ENCODE measurements at regions of chr3 and their contacts with region 1.

Region 1: DNA sequence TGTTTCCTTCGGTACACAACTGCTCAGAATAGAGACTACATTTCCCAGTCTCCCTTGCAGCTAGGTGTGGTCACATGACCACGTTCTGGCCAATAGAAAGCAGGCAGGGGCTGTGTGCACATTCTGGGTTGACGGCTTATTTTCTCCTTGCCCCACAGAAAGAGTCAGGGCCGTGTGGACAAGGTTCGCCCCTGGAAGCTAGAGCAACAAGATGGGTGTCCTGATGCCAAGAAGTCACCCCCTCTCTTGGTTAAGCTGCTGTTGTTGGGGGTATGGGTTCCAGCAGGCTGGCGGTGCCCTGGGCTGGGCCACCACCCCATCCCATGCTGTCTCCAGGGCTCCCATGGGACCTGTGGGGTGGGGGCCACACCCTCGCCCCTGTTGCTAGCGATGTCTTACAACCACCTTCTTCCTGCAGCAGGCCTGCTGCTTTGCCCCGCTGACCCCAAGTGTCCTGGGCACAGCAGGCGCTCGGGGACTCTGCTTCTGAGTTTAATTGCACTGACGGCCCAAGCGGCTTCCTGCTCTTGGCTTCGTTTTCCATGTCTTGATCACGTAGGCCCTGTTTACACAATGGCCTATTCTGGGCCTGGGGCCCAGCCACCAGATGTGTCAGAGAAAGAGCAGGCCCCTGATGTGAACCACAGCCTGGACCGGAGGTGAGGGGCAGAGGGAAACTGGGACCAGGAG is 24.9 kb downstream of the ABTB1 start:
- DNase-seq: peak; percentile 48
- ATAC-seq: peak; percentile 94
- H3K4me3 ChIP-seq: no peak overlapping the region
- H3K27ac ChIP-seq: no peak overlapping the region; the same call in 1 of the 2 replicates
- H3K4me1 ChIP-seq: peaks cover 14% of the 10 kb centered on the region
- H3K27me3 ChIP-seq: no peaks in the 10 kb centered on the region
- CTCF ChIP-seq: no peak
- EP300 ChIP-seq: no peak
- POLR2A ChIP-seq: peak; percentile 46
- RAD21 ChIP-seq: no peak

Region 2: GRCh38 chr3:127646501-127647046 is 51.1 kb before region 1 on chr3:
- CTCF ChIA-PET with region 1: interaction called, 14 read pairs
- POLR2A ChIA-PET with region 1: no interaction called
- RAD21 ChIA-PET with region 1: no interaction called
- SMC1A ChIA-PET with region 1: no interaction called
- in situ Hi-C with region 1: no loop called
- intact Hi-C with region 1: no loop called
- DNase-seq: no peak
- ATAC-seq: no peak
- H3K4me3 ChIP-seq: no peak overlapping the region
- H3K27ac ChIP-seq: no peak overlapping the region
- H3K4me1 ChIP-seq: no peaks in the 10 kb centered on the region
- H3K27me3 ChIP-seq: no peaks in the 10 kb centered on the region; a peak in 1 of 4 replicates
- CTCF ChIP-seq: no peak
- EP300 ChIP-seq: no peak
- POLR2A ChIP-seq: no peak
- RAD21 ChIP-seq: no peak

Region 3: DNA sequence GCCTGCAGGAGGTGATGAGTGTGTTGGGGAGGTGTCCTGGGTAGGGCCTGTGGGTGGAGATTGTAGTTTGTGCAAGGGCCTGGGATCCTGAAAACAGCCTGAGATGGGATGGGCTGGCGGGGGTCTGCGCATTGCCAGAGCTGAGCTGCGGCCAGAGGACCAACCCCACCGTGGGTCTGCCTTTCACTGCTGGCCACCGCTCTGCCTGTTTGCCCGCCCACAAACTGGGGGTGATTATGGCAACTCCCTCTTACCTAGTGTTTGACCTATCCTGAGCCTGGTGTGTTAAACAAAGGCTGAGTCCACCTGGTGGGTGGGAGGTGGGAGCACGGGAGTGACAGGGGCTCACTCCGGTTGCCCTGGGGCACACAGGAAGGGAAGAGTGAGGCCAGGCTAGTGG is 15.1 kb before region 1 on chr3:
- CTCF ChIA-PET with region 1: interaction called, 5 read pairs
- POLR2A ChIA-PET with region 1: interaction called, 3 read pairs
- RAD21 ChIA-PET with region 1: no interaction called
- SMC1A ChIA-PET with region 1: interaction called, 10 read pairs
- in situ Hi-C with region 1: no loop called
- intact Hi-C with region 1: no loop called
- DNase-seq: no peak
- ATAC-seq: no peak
- H3K4me3 ChIP-seq: no peak overlapping the region
- H3K27ac ChIP-seq: no peak overlapping the region
- H3K4me1 ChIP-seq: peaks cover 34% of the 10 kb centered on the region
- H3K27me3 ChIP-seq: no peaks in the 10 kb centered on the region
- CTCF ChIP-seq: no peak
- EP300 ChIP-seq: no peak
- POLR2A ChIP-seq: no peak
- RAD21 ChIP-seq: no peak

Measured in GM12878 (cell line).